Endothelial cell of umbilical vein (primary cell): ENCODE measurements at regions of chr5 and their contacts with region 1.

Region 1: GRCh38 chr5:141960449-141961202 is 2.6 kb upstream of the PCDH12 start:
- DNase-seq: peak; percentile 88
- H3K4me3 ChIP-seq: no peak overlapping the region
- H3K27ac ChIP-seq: no peak overlapping the region
- H3K4me1 ChIP-seq: peaks cover 31% of the 10 kb centered on the region
- H3K27me3 ChIP-seq: no peaks in the 10 kb centered on the region
- CTCF ChIP-seq: peak; percentile 80 to 86
- POLR2A ChIP-seq: no peak

Region 2: DNA sequence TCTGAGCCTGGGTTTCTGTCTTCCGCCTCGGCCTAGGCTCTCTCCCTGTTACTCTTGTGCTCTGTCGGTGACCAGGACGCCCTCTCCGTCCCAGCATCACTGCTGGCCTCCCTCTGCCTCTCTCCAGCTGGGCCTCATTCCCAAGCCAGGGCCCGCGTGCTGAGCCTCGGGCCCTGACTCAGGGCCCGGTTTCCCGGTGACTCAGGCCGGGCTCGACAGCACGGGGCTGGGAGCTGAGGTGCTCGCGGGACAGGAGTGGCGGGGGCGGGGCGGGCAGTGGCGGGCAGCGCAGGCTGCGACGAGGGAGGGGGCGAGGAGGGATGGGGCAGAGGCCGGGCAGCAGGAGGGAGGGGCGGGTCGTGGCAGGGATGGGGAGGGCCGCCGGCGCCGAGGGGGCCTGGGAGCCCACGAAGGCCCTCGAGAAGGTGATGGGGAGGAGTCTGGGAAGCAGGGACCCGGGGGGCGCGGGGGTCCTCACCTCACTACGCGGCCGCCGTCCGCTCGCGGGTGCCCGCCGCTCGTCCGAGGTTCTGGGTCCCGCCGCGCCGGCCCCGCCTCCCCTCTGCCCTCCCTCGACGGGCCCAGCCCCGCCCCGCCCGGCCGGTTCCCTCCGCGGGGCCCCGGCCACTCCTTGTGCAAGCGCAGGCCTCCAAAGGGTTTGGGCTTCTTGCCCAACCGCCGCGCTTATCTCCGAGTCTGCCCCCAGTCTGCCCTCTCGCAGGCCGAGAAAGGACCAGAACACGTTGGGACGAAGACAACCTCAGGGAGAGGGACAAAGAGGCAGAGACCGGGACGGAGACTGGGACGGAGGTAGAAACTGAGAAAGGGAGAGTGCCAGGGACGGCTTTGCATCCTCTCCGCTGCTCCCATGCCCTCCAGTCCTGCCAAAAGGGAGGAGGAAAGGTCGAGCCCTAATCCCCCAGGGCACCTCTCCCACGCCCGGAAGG is 278.7 kb before region 1 on chr5 and contains the start of gene ARAP3:
- CTCF ChIA-PET with region 1: interaction called, 20 read pairs
- POLR2A ChIA-PET with region 1: interaction called, 3 read pairs
- dilution Hi-C with region 1: no loop called
- intact Hi-C with region 1: no loop called
- DNase-seq: peak; percentile 92
- H3K4me3 ChIP-seq: peak within 1 kb of the TSS; percentile 5 to 69 (median 45)
- H3K27ac ChIP-seq: peak within 1 kb of the TSS; percentile 100
- H3K4me1 ChIP-seq: peaks cover 62% of the 10 kb centered on the region
- H3K27me3 ChIP-seq: no peaks in the 10 kb centered on the region
- CTCF ChIP-seq: no peak
- POLR2A ChIP-seq: peak; percentile 56
- total RNA-seq, gene ARAP3: 136 and 142 TPM in 2 replicates

Region 3: DNA sequence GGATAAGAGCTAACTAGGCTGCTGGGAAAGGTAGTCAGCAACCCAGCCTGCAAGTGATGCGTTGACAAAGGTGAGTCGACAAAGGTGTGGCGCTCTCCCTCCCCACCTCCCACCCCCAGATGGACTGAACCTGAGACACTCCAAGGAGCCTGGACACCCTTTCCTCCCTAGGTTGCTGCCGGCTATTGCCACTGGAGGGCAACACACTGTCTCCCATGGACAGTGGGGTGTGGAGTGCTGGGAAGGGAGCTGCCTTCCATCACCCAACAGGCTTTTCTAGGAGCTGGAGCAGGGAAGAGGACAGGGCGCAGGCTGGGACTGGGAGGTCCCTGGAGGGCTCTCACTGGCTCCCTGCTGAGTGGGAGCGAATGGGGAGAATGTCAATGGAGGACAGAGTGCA is 203.2 kb before region 1 on chr5:
- CTCF ChIA-PET with region 1: interaction called, 49 read pairs
- POLR2A ChIA-PET with region 1: no interaction called
- dilution Hi-C with region 1: no loop called
- intact Hi-C with region 1: loop called (anchors 1 kb)
- DNase-seq: peak; percentile 57
- H3K4me3 ChIP-seq: no peak overlapping the region
- H3K27ac ChIP-seq: no peak overlapping the region
- H3K4me1 ChIP-seq: no peaks in the 10 kb centered on the region
- H3K27me3 ChIP-seq: peaks cover 23 to 36% of the 10 kb centered on the region in 2 experiments
- CTCF ChIP-seq: peak; percentile 54 to 77
- POLR2A ChIP-seq: no peak

Region 4: GRCh38 chr5:141889282-141889871 is 71.2 kb before region 1 on chr5:
- CTCF ChIA-PET with region 1: interaction called, 303 read pairs
- POLR2A ChIA-PET with region 1: interaction called, 6 read pairs
- dilution Hi-C with region 1: no loop called
- intact Hi-C with region 1: loop called (anchors 1 kb)
- DNase-seq: peak; percentile 48
- H3K4me3 ChIP-seq: no peak overlapping the region
- H3K27ac ChIP-seq: no peak overlapping the region
- H3K4me1 ChIP-seq: no peaks in the 10 kb centered on the region
- H3K27me3 ChIP-seq: peaks cover 0 to 12% of the 10 kb centered on the region in 2 experiments
- CTCF ChIP-seq: peak; percentile 10 to 43
- POLR2A ChIP-seq: no peak

Region 5: DNA sequence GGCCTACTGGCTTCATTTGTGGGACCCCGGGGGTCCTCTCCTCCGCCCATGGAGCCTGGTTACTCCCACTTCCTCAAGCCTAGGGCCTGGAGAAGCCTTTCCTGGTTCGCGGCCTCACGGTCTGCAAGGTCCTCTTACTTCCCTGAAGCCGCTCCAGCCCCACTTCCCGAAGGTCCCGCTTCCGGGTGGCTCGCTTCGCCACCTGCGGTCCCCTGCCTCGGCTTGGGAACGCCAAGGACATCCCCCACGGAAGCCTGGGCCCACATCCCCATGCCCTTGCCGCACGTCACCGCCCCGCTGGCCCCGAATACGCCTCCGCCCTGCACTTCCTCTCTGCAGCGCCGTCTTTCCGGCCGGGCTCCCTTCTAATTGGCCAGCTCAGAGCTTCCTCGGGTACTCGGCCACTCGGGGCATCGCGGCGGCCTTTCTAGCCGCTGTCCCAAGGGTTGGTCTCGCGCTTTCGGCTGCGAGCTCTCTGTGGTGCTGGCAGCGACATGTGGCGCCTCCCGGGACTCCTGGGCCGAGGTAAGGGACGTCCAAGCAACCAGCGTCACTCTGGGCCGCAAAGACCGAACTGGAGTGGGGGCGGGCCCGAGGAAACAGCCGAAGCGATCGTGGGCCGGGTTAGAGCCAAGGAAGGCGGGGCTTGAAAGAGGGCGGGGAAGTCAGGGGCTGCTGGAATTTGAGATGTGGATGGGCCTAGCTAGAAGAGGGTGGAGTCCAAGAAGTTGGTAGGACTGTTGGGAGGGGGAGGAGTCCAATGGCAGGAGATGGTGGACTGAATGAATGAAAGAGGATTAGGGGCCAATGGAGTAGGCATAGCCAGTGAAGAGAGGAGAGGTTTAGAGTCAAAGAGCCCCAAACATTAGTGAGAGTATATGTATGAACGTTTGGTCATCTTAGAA is 36.9 kb before region 1 on chr5 and contains the start of gene DELE1:
- CTCF ChIA-PET with region 1: interaction called, 23 read pairs
- POLR2A ChIA-PET with region 1: interaction called, 4 read pairs
- dilution Hi-C with region 1: no loop called
- intact Hi-C with region 1: loop called (anchors 1 kb)
- DNase-seq: peak; percentile 95
- H3K4me3 ChIP-seq: peak within 1 kb of the TSS; percentile 28 to 63 (median 47)
- H3K27ac ChIP-seq: peak within 1 kb of the TSS; percentile 84
- H3K4me1 ChIP-seq: peaks cover 15% of the 10 kb centered on the region
- H3K27me3 ChIP-seq: no peaks in the 10 kb centered on the region
- CTCF ChIP-seq: no peak
- POLR2A ChIP-seq: peak; percentile 76
- total RNA-seq, gene DELE1: 67.0 and 105 TPM in 2 replicates